GM10248 (cell line): ENCODE measurements at regions of chr10 and their contacts with region 1.

Region 1: GRCh38 chr10:101782811-101783735 is at the start of gene NPM3:
- DNase-seq: peak; percentile 91
- CTCF ChIP-seq: no peak

Region 2: GRCh38 chr10:101587725-101588653 is 195.1 kb before region 1 on chr10 and contains the starts of genes DPCD and POLL:
- CTCF ChIA-PET with region 1: interaction called, 18 read pairs
- POLR2A ChIA-PET with region 1: no interaction called
- DNase-seq: peak; percentile 98
- CTCF ChIP-seq: no peak

Region 3: GRCh38 chr10:101602761-101603398 is 180.2 kb before region 1 on chr10:
- CTCF ChIA-PET with region 1: interaction called, 331 read pairs
- POLR2A ChIA-PET with region 1: interaction called, 3 read pairs
- DNase-seq: peak; percentile 84
- CTCF ChIP-seq: peak; percentile 96

Region 4: GRCh38 chr10:101758858-101759257 is 24.2 kb before region 1 on chr10:
- CTCF ChIA-PET with region 1: interaction called, 20 read pairs
- POLR2A ChIA-PET with region 1: no interaction called
- DNase-seq: no peak
- CTCF ChIP-seq: no peak

Region 5: DNA sequence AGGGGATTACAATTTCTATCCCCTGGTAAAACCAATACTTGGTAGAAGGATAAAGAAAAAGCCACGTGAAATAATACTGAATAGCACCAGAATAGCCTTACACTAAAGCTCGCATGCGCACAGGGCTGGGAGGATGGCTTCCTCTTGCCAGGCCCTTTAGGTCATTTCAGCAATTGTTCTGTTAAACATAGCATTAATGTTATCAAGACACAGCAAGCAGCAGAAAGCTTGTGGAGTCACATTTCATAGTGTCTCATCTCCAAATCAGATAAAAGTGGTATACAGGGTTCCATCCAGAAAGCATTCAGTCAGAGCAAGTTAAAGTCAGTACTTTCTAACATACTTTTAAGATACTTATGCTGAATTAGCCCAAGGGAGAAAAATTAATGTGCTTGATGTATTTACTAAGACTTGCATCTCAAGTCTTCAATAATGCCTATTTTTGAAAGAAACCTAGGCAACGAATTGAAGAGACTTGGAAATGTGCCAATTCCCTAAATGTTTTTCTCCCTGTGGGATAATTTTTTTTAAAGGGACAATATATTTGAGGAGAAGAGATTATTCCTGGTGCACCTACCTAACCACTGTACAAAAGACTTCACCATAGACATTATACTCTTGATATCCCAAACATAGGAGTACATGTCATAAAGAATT is 14.5 kb after region 1 on chr10:
- CTCF ChIA-PET with region 1: interaction called, 38 read pairs
- POLR2A ChIA-PET with region 1: interaction called, 3 read pairs
- DNase-seq: no peak
- CTCF ChIP-seq: no peak

Region 6: DNA sequence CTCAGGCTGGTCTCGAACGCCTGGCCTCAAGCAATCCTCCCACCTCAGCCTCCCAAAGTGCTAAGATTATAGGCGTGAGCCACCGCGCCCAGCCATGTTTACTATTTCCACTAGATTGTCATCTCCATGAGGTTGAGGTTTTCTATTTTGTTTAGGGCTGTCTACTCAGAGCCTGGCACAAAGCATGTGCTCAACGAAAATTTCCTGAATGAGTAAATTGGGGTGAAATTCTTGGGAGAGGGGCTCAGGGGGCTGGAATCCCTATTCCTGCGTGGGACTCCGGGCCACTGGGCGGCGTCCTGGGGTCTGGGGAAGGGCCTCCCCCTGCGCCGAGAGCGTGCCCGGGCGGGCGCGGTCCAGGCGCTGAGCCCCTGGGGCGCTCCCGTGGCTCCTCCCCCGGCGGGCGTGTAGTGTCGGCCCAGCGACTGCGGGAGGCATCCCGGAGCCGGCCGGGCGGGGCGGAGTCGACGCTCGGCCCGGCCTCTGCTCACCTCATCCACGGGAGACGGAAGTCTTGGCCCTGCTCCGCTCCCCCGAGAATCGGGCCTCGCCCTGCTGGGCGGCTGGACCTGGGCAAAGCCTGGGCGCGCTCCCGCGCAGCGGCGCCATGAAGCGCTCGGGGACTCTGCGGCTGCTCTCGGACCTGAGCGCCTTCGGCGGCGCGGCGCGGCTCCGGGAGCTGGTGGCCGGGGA is 281.9 kb after region 1 on chr10 and contains the start of gene HPS6:
- CTCF ChIA-PET with region 1: interaction called, 11 read pairs
- POLR2A ChIA-PET with region 1: no interaction called
- DNase-seq: peak; percentile 98
- CTCF ChIP-seq: peak; percentile 9